H1 (cell line): ENCODE measurements at regions of chr12 and their contacts with region 1.

Region 1: GRCh38 chr12:50620109-50620977 is 115.6 kb downstream of the DIP2B start:
- DNase-seq: peak in 1 of 2 experiments; percentile 29
- H3K4me3 ChIP-seq: no peak overlapping the region
- H3K27ac ChIP-seq: no peak overlapping the region
- H3K4me1 ChIP-seq: peaks cover 6 to 29% (median 23%) of the 10 kb centered on the region in 4 experiments
- H3K27me3 ChIP-seq: no peaks in the 10 kb centered on the region
- CTCF ChIP-seq: no peak
- EP300 ChIP-seq: no peak
- POLR2A ChIP-seq: no peak
- RAD21 ChIP-seq: no peak

Region 2: DNA sequence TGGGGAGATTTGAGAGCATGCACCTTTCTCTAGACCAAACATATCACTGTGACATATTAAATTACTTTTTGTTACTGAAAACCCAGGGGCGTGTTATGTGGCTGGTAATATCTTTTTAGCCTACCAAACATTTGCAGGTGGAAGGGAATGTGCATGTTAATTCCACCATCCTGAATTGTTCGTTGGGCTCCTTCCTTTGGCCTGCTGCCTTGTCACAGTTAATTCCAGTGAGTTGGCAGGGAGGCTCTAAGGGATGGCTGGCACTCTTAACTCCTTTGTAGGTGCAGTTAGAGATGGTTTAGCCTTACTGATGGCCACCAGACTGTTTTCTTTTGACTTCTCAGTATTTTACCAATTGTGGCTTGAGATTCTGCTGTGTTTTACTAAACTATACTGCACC is 51.0 kb before region 1 on chr12:
- CTCF ChIA-PET with region 1: no interaction called
- POLR2A ChIA-PET with region 1: no interaction called
- DNase-seq: no peak
- H3K4me3 ChIP-seq: no peak overlapping the region
- H3K27ac ChIP-seq: no peak overlapping the region
- H3K4me1 ChIP-seq: peaks cover 0 to 16% (median 15%) of the 10 kb centered on the region in 4 experiments; a peak in 5 of 7 replicates
- H3K27me3 ChIP-seq: no peaks in the 10 kb centered on the region
- CTCF ChIP-seq: no peak
- EP300 ChIP-seq: no peak
- POLR2A ChIP-seq: no peak
- RAD21 ChIP-seq: no peak

Region 3: DNA sequence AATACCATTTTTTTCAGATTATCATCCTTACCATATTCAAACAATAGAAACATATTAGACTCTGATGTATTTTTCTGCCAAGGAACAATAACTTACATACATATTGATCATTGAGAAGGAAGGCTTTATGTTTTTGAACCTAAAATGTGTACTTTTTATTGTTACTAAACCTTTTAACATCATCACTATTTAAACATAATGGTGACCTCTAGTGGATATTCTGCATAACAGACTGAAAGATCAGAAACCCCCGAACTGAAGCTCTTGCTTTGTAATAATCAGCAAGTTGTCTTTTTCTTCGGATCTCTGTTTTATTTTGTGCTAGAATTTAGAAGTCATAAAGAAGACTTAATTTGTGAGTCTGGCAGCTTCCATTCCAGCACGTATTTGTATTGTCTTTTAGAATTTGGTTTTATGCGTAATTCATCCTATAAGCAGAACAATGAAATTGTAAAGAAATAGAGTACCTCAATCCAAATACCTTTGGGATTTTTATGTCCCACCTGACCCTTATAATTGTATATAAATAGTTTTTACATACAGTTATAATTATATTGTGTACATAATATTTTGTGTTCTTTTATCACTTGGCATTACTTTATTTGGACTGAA is 17.6 kb after region 1 on chr12:
- CTCF ChIA-PET with region 1: interaction called, 28 read pairs
- POLR2A ChIA-PET with region 1: no interaction called
- DNase-seq: no peak
- H3K4me3 ChIP-seq: no peak overlapping the region
- H3K27ac ChIP-seq: no peak overlapping the region
- H3K4me1 ChIP-seq: no peaks in the 10 kb centered on the region
- H3K27me3 ChIP-seq: no peaks in the 10 kb centered on the region
- CTCF ChIP-seq: peak in 2 of 3 experiments; percentile 19 to 35; a peak in 2 of 4 replicates
- EP300 ChIP-seq: no peak
- POLR2A ChIP-seq: no peak
- RAD21 ChIP-seq: peak; percentile 59 to 63

Region 4: GRCh38 chr12:50655374-50655921 is 35.1 kb after region 1 on chr12:
- CTCF ChIA-PET with region 1: no interaction called
- POLR2A ChIA-PET with region 1: no interaction called
- DNase-seq: no peak
- H3K4me3 ChIP-seq: no peak overlapping the region
- H3K27ac ChIP-seq: no peak overlapping the region
- H3K4me1 ChIP-seq: no peaks in the 10 kb centered on the region
- H3K27me3 ChIP-seq: no peaks in the 10 kb centered on the region
- CTCF ChIP-seq: no peak
- EP300 ChIP-seq: no peak
- POLR2A ChIP-seq: no peak
- RAD21 ChIP-seq: no peak